Ovary (tissue), 10 donors: ENCODE measurements at regions of chr17 and their contacts with region 1.

Region 1: DNA sequence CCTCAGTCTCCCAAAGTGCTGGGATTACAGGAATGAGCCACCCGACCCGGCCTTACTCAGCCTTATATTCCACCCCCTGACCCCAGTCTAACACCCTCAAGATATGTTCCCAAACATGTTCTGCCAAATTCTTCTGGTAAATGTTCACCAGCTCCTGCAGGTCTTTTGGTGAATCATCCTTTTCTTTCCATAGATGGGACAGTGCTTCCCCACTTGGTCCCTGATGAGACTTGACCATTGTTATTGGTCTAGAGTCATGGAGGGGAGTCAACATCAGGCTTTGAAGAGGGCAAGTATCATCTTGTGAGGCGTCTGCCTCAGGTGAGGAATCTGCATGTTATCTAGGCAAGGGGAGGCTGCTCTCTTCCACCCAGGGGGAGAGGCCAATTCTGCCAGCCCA is 10.4 kb upstream of the RUNDC3A start:
- DNase-seq: no peak
- H3K4me3 ChIP-seq: no peak overlapping the region
- H3K27ac ChIP-seq: no peak overlapping the region
- H3K4me1 ChIP-seq: no peaks in the 10 kb centered on the region
- H3K27me3 ChIP-seq: no peaks in the 10 kb centered on the region
- CTCF ChIP-seq: no peak
- EP300 ChIP-seq: no peak
- POLR2A ChIP-seq: no peak

Region 2: DNA sequence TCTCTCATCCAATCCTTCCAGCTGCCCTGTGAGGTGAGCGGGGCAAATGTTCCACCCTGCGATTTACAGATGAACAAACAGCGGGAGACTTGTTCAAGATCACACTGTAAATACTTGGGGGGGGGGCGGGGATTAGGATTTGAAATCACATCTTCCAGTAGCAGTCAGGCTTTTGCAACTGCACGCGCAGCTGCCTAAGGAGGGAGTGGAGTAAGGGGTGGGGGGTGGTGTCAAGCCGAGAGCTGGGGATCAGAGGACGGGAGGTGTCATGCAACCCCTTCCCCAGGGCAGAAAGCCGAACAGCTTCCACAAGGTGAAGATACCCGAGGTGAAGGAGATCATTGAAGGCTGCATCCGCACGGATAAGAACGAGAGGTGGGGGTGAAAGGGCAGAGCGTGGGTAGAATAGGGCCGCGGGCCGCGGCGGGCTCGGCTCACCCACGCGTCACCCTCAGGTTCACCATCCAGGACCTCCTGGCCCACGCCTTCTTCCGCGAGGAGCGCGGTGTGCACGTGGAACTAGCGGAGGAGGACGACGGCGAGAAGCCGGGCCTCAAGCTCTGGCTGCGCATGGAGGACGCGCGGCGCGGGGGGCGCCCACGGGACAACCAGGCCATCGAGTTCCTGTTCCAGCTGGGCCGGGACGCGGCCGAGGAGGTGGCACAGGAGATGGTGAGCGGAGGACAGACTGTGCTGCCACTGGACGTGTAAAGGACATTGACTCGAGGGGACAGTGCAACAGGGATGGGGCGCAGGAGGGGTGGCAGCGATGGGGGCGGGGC is 1513.0 kb before region 1 on chr17:
- intact Hi-C with region 1: loop called in 1 of 4 experiments (anchors 5 kb)
- DNase-seq: peak in 1 of 5 donors; percentile 37
- H3K4me3 ChIP-seq: no peak overlapping the region
- H3K27ac ChIP-seq: no peak overlapping the region
- H3K4me1 ChIP-seq: peaks cover 3% of the 10 kb centered on the region
- H3K27me3 ChIP-seq: no peaks in the 10 kb centered on the region
- CTCF ChIP-seq: no peak
- EP300 ChIP-seq: no peak
- POLR2A ChIP-seq: no peak

Region 3: DNA sequence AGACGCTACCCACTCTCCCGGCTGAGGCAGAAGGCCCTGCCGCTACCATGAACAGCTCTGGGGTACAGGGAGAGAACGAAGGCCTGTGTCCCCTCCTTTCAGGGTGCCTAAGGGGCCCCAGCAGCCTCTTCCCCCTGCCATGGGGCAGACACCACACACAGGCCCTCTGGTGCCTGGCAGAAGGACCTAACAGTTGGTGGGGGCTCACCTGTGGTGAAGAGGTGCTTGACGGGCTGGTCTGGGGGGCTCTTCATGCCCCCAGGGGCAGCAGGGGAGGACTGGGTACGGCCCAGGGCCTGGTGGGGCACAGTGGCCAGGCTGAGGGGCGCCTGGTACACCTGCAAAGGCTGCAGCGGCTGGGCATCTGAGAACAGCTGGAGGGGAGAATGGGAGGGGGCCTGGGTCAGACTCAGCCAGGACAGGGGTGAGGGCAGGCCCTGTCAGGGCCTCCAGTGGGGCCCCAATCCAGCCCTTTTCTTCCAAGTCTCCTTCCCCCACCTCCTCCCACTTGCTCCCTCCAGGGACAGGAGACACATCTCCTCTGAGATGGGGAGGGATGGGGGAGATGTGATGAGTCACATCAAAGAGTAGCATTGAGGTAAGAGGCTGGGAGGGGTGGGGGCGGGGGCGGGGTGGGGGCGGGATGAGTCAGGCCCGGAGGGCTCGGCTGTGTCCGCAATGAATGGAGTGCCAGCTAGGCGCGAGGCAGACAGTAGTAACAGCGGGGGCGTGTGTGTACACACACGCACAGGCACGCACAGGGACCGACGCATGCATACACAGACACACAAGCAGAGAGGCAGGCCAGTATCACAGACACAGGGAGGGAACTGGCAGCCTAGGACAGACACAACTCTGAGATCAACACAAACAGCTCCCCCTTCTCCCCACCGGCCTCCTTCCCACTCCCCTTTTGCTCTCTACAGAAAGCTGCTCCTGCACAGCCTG is 211.3 kb before region 1 on chr17:
- intact Hi-C with region 1: no loop called
- DNase-seq: peak; percentile 54 to 75 (median 68)
- H3K4me3 ChIP-seq: no peak overlapping the region
- H3K27ac ChIP-seq: peak overlapping the region; percentile 48 to 67
- H3K4me1 ChIP-seq: peaks cover 2% of the 10 kb centered on the region
- H3K27me3 ChIP-seq: no peaks in the 10 kb centered on the region
- CTCF ChIP-seq: no peak
- EP300 ChIP-seq: no peak
- POLR2A ChIP-seq: no peak